Natural killer cell (primary cell): ENCODE measurements at regions of chr17 and their contacts with region 1.

Region 1: DNA sequence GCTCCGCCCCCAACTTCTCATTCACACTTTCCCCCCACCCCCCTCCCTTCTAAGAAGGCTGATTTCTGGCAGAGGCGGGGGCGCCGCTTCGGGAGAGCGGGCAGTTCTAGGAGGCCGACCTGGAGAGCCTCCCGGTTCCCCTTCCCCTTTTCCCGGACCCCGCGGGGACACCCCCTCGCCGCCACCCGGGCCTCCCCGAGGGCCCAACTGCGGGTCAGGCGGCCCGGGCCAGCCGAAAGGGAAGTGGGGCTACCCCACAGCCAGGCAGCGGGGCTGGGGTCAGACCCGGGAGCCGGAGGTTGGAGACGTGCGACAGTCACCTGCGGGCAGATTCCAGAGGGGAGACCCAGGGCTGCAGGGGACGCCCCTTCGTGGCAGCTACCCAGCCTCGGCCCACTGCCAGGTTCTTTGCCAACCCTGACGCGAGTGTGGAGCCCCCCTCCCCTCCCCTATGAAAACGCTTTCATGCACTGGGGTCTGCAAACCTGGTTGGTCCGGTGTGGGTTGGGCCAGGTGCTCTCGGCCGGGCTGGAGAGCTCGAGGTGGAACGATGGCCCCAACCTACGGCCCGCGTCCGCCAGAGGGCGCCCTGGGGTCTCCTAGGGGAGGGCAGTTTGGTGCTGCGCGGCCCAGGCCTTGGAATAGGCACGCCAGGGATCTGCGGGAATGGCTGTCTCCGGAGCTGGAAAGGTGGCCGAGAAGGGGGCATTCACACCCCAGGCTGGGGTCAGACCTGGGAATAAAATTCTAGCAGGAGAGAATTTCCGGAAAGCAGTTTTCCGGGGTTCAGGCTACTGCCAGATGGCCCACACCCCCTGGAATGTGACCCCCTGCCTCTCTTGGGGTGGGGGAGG is 721 bp upstream of the SOCS3 start:
- DNase-seq: peak; percentile 87 to 90
- ATAC-seq: peak; percentile 35 to 60 (median 43)
- H3K4me3 ChIP-seq: peak overlapping the region; percentile 45
- H3K4me3 Mint-ChIP-seq: peak overlapping the region; percentile 90
- H3K27ac ChIP-seq: peak overlapping the region; percentile 61
- H3K27ac Mint-ChIP-seq: peak overlapping the region; percentile 61 to 71
- H3K4me1 ChIP-seq: peaks cover 58% of the 10 kb centered on the region
- H3K4me1 Mint-ChIP-seq: peaks cover 14 to 42% of the 10 kb centered on the region in 2 donors
- H3K27me3 ChIP-seq: no peaks in the 10 kb centered on the region
- H3K27me3 Mint-ChIP-seq: peaks cover 2 to 6% of the 10 kb centered on the region in 2 donors
- CTCF ChIP-seq: peak; percentile 90

Region 2: DNA sequence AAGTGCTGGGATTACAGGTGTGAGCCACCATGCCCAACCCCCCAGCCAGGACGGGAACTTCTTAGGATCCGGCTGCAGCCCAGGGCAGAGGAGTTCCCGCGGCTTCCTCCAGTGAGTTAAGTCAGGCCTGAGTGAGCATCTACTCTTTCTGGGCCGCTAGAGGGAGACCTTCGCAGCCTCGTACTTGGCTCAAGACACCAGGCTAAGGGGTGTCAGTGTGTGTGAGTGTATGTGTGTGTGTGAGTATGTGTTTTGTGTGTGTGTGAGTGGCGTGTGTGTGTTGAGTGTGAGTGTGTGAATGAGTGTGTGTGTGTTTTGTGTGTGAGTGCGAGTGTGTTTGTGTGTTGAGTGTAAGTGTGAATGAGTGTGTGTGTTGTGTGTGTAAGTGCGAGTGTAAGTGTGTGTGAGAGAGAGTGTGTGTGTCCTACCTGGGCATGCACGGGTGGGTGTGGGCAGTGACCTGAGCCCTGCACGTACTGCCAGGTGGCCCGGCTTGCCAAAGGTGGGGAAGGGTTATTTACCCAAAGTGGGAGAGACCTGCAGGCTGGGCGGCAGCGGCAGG is 70.7 kb before region 1 on chr17:
- intact Hi-C with region 1: loop called (anchors 5 kb)
- DNase-seq: peak; percentile 46 to 92
- ATAC-seq: peak; percentile 86 to 99 (median 98)
- H3K4me3 ChIP-seq: no peak overlapping the region
- H3K4me3 Mint-ChIP-seq: no peak overlapping the region
- H3K27ac ChIP-seq: no peak overlapping the region
- H3K27ac Mint-ChIP-seq: no peak overlapping the region
- H3K4me1 ChIP-seq: peaks cover 7% of the 10 kb centered on the region
- H3K4me1 Mint-ChIP-seq: no peaks in the 10 kb centered on the region
- H3K27me3 ChIP-seq: no peaks in the 10 kb centered on the region
- H3K27me3 Mint-ChIP-seq: no peaks in the 10 kb centered on the region
- CTCF ChIP-seq: peak; percentile 61

Region 3: GRCh38 chr17:78341559-78342448 is 18.8 kb before region 1 on chr17:
- intact Hi-C with region 1: loop called (anchors 2 kb)
- DNase-seq: peak in 1 of 2 donors; percentile 55
- ATAC-seq: peak; percentile 51 to 63 (median 54)
- H3K4me3 ChIP-seq: no peak overlapping the region
- H3K4me3 Mint-ChIP-seq: peak overlapping the region; percentile 75
- H3K27ac ChIP-seq: peak overlapping the region; percentile 81
- H3K27ac Mint-ChIP-seq: no peak overlapping the region
- H3K4me1 ChIP-seq: peaks cover 61% of the 10 kb centered on the region
- H3K4me1 Mint-ChIP-seq: peaks cover 23 to 38% of the 10 kb centered on the region in 2 donors
- H3K27me3 ChIP-seq: no peaks in the 10 kb centered on the region
- H3K27me3 Mint-ChIP-seq: peaks cover 0 to 2% of the 10 kb centered on the region in 2 donors
- CTCF ChIP-seq: no peak

Region 4: DNA sequence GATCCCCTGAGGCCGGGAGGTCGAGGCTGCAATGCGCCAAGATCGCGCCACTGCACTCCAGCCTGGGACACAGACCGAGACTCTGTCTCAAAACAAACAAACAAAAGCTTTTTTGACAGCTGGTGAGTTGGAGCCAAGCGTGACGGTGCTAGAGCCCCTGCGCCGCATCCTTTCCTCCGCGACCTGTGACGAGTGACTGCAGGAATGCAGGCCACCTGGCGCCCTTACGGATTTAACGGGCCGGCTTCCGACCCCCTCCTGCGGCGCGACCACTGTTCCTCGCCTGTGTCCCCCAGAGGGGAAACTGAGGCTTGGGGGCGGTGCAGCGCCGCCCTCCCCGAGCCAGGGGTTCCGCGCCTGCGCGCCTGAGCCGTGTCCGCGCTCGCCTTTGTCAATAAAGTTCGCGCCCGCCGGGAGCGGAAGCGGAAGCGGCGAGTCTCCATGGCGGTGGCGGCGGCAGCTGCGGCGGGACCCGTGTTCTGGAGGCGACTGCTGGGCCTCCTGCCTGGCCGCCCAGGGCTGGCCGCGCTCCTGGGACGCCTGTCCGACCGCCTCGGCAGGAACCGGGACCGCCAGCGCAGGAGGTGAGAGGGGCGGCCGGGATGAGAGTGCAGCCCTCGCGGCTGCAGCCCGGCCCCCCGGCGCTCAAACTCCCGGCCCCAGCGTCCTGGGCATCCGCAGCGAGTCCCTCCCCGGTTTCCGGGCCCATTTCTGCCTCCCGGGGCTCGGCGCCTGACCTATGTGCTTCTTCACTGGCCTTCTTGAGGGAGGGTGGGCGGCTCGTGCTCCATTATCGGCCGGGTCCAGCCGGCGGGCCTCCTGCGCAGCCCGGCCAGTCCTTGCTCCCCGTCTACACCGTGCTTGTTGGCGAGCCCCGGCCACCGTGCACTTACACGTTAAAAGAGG is 17.9 kb after region 1 on chr17 and contains the start of gene PGS1:
- intact Hi-C with region 1: loop called (anchors 2 kb)
- DNase-seq: peak; percentile 83 to 90
- ATAC-seq: peak; percentile 73 to 86 (median 76)
- H3K4me3 ChIP-seq: peak within 1 kb of the TSS; percentile 90
- H3K4me3 Mint-ChIP-seq: peak within 1 kb of the TSS; percentile 91
- H3K27ac ChIP-seq: peak within 1 kb of the TSS; percentile 66
- H3K27ac Mint-ChIP-seq: peak within 1 kb of the TSS; percentile 84 to 95
- H3K4me1 ChIP-seq: peaks cover 41% of the 10 kb centered on the region
- H3K4me1 Mint-ChIP-seq: peaks cover 38% of the 10 kb centered on the region in 2 donors
- H3K27me3 ChIP-seq: no peaks in the 10 kb centered on the region
- H3K27me3 Mint-ChIP-seq: no peaks in the 10 kb centered on the region
- CTCF ChIP-seq: no peak
- total RNA-seq, gene PGS1: 47.9 to 53.6 (median 48.3) TPM

Region 5: DNA sequence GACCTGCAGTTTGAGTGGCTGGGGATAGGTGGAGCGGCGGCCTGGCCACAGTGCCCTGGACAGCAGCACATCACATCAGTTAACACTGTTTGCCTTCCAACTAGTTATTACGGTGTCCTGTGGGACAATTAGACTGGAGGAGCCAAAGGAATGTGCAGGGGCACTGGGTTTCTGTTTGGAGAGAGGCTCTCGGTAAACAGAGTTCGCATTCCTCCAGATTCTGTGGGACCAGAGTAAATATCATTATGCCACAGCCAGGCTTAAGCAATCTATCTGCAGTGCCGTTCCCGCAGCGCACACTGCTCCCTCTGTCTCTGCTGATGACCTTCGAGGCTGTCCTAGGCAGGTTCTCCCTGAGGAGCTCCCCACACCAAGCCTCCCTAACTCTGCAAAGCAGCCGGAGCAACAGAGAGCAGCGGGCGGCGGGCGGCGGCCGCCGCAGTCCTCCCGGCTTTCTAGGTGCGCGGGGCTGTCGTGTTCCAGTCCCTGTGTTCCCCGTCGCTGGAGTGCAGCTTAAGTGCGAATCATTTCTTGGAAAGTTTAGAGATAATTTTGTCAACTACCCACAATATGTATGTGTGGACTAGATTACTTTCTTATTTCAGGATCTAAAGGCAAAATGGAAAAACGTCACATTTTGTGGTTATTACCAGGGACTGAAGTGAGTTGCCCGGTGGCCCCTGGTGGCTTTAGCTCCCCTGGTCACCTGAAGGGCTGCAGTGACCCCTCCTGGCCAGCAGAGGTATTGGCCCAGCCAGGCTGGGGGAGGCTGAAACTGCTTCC is 61.1 kb after region 1 on chr17:
- intact Hi-C with region 1: loop called (anchors 1 kb)
- DNase-seq: peak; percentile 68 to 84
- ATAC-seq: peak; percentile 89 to 97 (median 96)
- H3K4me3 ChIP-seq: no peak overlapping the region
- H3K4me3 Mint-ChIP-seq: no peak overlapping the region
- H3K27ac ChIP-seq: no peak overlapping the region
- H3K27ac Mint-ChIP-seq: no peak overlapping the region
- H3K4me1 ChIP-seq: peaks cover 11% of the 10 kb centered on the region
- H3K4me1 Mint-ChIP-seq: peaks cover 10 to 15% of the 10 kb centered on the region in 2 donors
- H3K27me3 ChIP-seq: no peaks in the 10 kb centered on the region
- H3K27me3 Mint-ChIP-seq: no peaks in the 10 kb centered on the region
- CTCF ChIP-seq: peak; percentile 96